AG04450 (cell line): ENCODE measurements at regions of chr1 and their contacts with region 1.

Region 1: DNA sequence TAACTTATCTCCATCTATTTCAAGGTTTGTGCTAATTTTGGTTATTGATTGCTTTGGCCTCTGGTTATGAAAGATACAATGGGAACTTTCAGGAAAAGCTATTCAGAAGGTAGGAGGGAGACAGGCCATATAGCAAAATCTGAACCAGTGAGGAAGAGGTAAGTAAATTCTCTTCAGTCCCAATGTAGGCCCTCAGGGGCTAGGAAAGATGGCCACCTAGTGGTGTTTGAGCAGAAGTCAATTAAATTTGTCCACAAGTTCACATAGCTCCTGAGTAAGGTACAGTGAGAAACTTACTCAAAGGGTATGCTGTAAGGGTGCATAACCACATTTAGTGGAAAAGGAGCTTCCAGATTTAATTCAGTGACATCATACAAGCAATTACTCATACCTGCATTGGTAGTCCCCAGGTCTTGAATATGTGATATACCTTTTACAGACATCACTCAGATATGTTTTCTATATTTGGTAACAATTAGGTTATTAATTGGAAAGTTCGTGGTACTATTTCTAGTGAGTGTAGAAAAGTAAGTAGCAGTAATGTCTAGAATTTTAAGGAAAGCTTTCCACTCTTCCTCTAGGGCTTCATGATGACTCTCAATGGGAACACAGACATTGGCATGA is 21.4 kb upstream of the FMO1 start:
- DNase-seq: peak; percentile 60
- H3K4me3 ChIP-seq: no peak overlapping the region
- H3K27ac ChIP-seq: no peak overlapping the region
- H3K27me3 ChIP-seq: no peaks in the 10 kb centered on the region
- CTCF ChIP-seq: peak; percentile 85

Region 2: DNA sequence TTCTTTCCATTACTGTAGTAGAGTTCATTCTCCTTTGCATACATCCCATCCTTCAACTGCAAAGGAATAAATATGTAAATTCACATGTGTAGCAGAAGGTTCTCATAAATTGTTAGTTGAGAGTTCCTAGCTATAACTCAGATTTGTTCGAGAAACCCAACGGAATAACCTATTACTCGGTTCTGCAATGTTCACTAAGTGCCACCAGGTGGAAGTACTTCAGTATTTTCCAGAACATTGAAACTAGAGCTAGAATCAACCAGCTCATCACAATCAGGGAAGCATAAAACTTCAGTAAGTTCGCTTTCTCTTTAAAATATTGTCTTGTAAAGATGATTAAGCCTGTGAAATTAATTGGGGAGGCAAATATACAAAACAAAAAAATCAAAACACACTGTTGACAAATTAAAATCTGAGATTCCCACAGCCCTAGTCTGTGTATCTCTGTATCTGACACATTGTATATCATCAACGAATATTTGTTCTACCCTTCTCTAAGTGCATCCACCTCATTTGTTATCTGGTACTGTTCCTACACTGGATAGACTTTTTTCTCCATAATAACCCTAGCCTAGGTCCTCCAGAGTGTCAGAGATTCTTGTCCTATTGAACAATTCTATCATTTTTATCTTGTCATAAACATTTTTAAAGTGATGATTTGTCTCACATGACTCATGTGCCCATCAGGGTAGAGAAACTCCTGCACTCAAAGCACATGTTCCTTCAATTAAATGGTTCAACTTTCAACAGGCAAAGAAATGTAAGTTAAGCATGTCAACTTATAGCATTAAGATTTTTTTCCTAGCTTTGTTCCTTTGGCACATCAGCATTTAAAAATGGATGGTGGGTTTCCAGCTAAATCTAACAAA is 259.6 kb before region 1 on chr1:
- CTCF ChIA-PET with region 1: interaction called, 234 read pairs
- POLR2A ChIA-PET with region 1: no interaction called
- DNase-seq: peak; percentile 23
- H3K4me3 ChIP-seq: no peak overlapping the region
- H3K27ac ChIP-seq: no peak overlapping the region
- H3K27me3 ChIP-seq: no peaks in the 10 kb centered on the region
- CTCF ChIP-seq: peak; percentile 72

Region 3: DNA sequence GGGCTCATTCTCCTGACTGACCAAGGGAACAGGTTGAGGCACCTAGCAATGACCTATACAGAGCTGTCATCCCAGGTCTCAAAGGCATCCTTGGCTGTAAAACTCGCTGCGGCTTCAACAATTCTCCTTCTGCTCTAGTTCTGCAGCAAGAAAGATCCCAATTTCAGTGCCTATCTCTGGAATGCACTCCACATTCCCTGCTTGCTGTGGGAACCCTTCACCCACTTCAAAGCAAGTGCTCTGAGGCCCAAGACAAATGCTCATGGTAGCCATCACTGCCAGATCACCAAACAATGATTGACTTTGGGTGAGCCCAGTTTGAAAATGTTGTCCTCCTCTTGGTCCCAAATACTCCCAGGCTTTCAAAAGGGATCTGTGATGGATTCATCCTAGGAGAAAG is 173.9 kb before region 1 on chr1:
- CTCF ChIA-PET with region 1: no interaction called
- POLR2A ChIA-PET with region 1: no interaction called
- DNase-seq: no peak
- H3K4me3 ChIP-seq: no peak overlapping the region
- H3K27ac ChIP-seq: no peak overlapping the region
- H3K27me3 ChIP-seq: no peaks in the 10 kb centered on the region
- CTCF ChIP-seq: no peak

Region 4: DNA sequence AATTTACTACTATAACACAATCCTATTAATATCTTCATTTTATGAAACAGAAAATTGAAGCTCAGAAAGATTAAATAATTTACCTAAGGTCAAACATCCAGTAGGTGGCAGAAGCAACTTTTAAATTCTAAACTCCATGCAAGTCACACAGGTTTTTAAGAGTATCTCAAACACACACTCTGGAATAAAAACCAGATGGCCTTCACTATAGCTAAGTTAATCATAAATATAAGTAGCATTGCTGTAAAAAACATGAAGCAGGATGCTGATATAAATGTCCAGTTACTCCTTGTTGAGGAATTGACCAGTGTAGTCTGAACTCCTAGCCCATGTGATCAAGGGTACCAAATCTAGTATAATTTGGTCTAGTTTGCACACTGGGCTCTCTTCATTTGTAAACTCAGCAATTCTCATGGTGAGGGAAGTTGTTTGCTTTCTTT is 145.5 kb before region 1 on chr1:
- CTCF ChIA-PET with region 1: interaction called, 253 read pairs
- POLR2A ChIA-PET with region 1: interaction called, 5 read pairs
- DNase-seq: peak; percentile 33
- H3K4me3 ChIP-seq: no peak overlapping the region
- H3K27ac ChIP-seq: no peak overlapping the region
- H3K27me3 ChIP-seq: no peaks in the 10 kb centered on the region
- CTCF ChIP-seq: peak; percentile 55

Region 5: DNA sequence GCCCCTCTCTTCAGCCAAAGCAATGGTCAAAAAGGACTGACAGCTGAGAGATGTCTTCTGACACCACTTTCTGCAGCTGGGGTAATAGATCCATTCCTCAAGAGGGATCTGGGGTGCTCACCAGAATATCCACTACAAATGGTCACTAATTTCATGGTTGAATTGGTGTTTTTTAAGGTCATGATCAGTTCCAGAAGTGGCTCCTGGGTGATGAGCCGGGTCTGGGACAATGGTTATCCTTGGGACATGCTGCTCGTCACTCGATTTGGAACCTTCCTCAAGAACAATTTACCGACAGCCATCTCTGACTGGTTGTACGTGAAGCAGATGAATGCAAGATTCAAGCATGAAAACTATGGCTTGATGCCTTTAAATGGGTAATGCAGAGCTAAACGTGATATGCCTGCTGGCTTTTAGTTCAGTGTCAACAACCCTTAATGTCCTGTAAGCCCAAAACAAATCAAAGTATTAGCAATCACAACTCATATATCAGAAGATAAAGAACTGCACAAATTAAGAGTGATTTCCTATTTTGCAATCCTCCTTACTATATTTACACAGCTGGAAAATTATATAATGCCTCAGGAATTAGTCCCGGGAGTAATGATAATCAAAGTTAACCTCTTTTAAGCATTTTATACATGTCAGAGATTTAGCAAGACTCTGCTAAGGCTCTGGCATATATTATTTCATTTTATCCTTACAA is 116.1 kb before region 1 on chr1:
- CTCF ChIA-PET with region 1: interaction called, 12 read pairs
- POLR2A ChIA-PET with region 1: no interaction called
- DNase-seq: peak; percentile 46
- H3K4me3 ChIP-seq: no peak overlapping the region
- H3K27ac ChIP-seq: peak overlapping the region; percentile 40
- H3K27me3 ChIP-seq: no peaks in the 10 kb centered on the region
- CTCF ChIP-seq: no peak

Region 6: DNA sequence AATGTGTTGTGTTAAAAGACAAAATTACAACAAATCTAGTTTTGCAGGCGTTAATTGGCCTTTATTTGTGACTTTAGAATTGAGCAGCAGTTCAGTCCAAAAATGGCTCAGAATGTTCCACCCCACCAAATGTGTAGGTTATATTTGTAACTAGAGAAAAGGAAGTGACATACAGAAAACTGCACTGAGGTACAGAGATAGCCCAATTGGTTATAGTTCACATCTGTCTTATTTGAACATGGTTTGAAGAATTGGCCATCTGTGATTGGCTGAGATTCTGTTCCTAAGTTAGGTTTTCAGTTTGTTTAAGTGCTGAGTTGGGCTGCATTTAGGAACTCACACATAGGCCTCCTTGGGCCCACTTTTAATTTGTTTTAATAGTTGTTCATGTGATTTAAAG is 53.8 kb before region 1 on chr1:
- CTCF ChIA-PET with region 1: interaction called, 38 read pairs
- POLR2A ChIA-PET with region 1: no interaction called
- DNase-seq: no peak
- H3K4me3 ChIP-seq: no peak overlapping the region
- H3K27ac ChIP-seq: no peak overlapping the region
- H3K27me3 ChIP-seq: no peaks in the 10 kb centered on the region
- CTCF ChIP-seq: no peak

Region 7: DNA sequence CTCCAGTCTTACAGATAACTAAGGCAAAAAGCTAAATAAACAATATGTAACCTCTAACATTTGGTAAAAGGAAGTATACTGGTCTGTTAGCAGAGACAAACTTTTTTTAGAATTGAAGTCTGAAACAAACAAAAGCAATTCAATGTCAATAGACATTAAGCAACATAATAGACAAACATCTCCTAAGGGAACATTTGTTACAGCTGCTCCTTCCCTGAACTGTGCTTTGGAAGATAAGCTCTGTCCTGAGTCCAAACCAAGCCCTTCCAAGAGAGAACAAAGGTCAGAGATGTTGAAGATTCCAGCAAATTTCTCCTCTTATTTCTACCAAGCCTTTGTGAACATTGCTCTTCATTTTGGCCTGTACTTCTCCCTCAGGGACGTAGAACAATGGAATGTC is 16.5 kb before region 1 on chr1:
- CTCF ChIA-PET with region 1: interaction called, 30 read pairs
- POLR2A ChIA-PET with region 1: no interaction called
- DNase-seq: no peak
- H3K4me3 ChIP-seq: no peak overlapping the region
- H3K27ac ChIP-seq: no peak overlapping the region
- H3K27me3 ChIP-seq: no peaks in the 10 kb centered on the region
- CTCF ChIP-seq: no peak

Region 8: DNA sequence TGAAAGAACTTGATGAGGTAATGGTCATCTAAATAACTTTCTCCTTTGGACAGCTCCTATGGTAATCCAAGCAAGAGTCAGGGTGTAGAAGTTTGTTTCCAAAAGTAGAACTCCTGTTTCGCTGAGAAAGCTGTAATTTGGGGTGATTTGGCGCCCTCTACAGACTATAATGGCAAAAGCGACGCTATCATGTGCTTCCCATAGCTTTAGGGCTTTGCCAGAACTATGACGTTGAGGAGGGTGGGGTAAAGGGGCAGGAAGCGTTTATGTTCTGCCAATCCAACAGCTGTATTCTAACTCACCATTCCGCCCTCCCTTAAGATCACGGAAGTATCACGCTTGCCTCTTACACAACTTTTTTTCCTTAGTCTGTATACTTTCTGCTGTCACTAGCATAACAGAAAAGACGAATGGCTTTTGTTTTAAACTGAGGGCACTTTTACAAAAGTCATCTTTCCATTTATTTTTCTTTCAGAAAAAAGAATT is 87.0 kb after region 1 on chr1 and contains the start of gene FMO4:
- CTCF ChIA-PET with region 1: interaction called, 26 read pairs
- POLR2A ChIA-PET with region 1: no interaction called
- DNase-seq: peak; percentile 97
- H3K4me3 ChIP-seq: peak within 1 kb of the TSS; percentile 27; the same call in 1 of the 2 replicates
- H3K27ac ChIP-seq: no peak within 1 kb of the TSS
- H3K27me3 ChIP-seq: no peaks in the 10 kb centered on the region
- CTCF ChIP-seq: peak; percentile 78
- polyA plus RNA-seq, gene FMO4: 0.46 and 1.2 TPM in 2 replicates

Region 9: DNA sequence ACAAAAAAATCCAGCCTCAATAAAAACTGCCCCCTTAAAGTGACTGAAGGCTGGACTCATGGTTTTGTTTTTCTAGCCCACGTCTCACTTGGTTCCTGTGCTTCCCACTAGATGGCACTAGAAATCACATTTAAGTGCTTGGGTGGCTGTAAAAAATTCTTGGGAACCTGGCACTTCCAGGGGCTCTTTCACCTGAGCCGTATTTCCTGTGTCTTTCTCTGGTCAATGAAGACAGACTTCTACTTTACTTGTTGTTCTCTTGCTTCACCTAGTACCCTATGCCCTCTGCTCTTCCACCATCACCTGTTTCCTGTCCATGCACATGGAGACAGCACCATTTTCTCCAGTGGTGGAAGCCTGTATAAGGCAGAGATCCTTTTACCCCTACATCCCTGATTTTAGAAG is 574.6 kb after region 1 on chr1:
- CTCF ChIA-PET with region 1: no interaction called
- POLR2A ChIA-PET with region 1: no interaction called
- DNase-seq: no peak
- H3K4me3 ChIP-seq: no peak overlapping the region
- H3K27ac ChIP-seq: no peak overlapping the region
- H3K27me3 ChIP-seq: no peaks in the 10 kb centered on the region
- CTCF ChIP-seq: peak; percentile 91